Heart left ventricle (tissue), 16 donors: ENCODE measurements at regions of chr1 and their contacts with region 1.

Region 1: DNA sequence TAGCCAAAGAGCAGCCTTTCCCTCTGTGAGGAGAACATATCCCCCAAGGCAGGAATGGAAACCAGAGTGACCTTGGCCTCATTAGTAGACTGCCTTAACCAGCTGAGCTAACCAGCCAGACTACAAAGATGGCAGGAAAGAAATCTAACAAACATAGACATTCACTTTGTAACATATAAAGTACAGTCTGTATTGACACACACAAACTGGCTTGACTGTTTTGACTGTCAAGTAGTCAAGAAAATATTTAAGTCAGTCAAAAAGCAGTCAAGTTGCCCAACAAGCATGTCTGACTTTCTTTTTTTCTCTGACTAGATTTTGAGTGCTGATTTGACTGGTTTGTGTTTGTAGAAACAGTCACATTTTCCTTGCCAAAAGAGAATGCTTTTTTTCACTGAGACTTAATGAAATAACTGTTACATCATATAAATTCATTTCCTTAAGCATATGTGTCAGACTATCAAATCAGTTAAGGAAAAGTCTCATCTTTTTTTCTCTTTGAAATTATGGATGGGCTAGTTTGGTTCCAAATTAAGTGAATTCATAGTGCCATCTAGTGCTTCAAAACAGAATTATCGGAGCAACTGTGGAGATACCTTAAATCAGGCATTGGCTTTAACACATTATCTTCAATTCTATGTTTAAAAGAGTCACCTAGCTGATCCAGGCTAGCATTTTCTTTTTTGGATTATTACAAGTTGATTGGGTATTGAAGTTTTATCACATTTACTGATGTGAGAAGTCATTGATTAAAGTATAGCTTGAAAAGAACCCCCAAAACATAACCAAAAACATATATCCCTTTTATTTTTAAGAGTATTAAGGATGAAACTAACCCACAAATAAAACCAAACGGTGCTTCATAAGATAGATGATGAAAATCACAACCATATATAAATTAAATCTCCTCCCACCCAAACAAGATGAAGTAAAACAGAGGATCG is 75.0 kb downstream of the ATP6V1G3 start:
- DNase-seq: no peak
- ATAC-seq: no peak
- H3K4me3 ChIP-seq: no peak overlapping the region
- H3K27ac ChIP-seq: no peak overlapping the region
- H3K4me1 ChIP-seq: peaks cover 0 to 5% (median 0%) of the 10 kb centered on the region in 12 donors
- H3K27me3 ChIP-seq: no peaks in the 10 kb centered on the region
- CTCF ChIP-seq: peak; percentile 43 to 75 (median 61)
- POLR2A ChIP-seq: no peak

Region 2: DNA sequence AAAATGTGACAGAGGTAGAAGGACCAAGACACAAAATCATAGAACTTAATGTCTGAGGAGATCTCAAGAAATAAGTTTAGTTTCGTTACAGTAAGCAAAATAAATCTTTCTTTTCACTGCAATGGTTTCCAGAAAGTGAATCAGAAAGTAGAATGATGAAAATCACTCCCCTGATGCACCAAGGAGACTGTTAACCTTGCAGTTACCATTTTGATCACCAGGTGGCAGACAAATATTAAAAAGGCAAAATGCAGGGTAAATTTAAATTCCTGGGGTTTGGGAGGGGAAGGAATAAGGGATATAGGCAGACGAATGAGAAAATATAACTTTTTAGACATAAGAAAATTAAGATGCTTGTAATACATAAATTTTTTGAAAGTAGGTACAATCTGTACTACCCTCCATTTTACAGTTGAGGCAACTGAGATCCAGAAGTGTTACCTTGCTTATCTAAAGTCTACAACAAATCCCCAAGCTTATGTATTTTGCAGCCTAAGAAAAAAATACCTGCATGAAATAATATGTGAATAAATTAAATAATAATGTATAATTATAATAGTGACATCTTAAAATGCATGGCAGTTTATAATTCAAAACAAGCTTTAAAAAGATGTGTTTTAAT is 944.2 kb before region 1 on chr1:
- intact Hi-C with region 1: loop called in 5 of 10 experiments (anchors 5 to 10 kb)
- DNase-seq: no peak
- ATAC-seq: no peak
- H3K4me3 ChIP-seq: no peak overlapping the region
- H3K27ac ChIP-seq: no peak overlapping the region
- H3K4me1 ChIP-seq: peaks cover 0 to 3% (median 0%) of the 10 kb centered on the region in 12 donors
- H3K27me3 ChIP-seq: no peaks in the 10 kb centered on the region
- CTCF ChIP-seq: peak; percentile 20 to 65 (median 48)
- POLR2A ChIP-seq: no peak

Region 3: GRCh38 chr1:197924516-197925123 is 540.9 kb before region 1 on chr1:
- intact Hi-C with region 1: loop called in 1 of 10 experiments (anchors 10 kb)
- DNase-seq: no peak
- ATAC-seq: peak in 3 of 4 donors; percentile 61 to 73 (median 66)
- H3K4me3 ChIP-seq: no peak overlapping the region
- H3K27ac ChIP-seq: no peak overlapping the region
- H3K4me1 ChIP-seq: peaks cover 0 to 8% (median under 1%) of the 10 kb centered on the region in 12 donors
- H3K27me3 ChIP-seq: peaks cover 17 to 84% (median 47%) of the 10 kb centered on the region in 9 donors
- CTCF ChIP-seq: peak; percentile 52 to 77 (median 66)
- POLR2A ChIP-seq: no peak

Region 4: GRCh38 chr1:198088360-198089071 is 377.0 kb before region 1 on chr1:
- intact Hi-C with region 1: loop called in 8 of 10 experiments (anchors 1 to 5 kb)
- DNase-seq: no peak
- ATAC-seq: peak in 3 of 4 donors; percentile 13 to 67 (median 56)
- H3K4me3 ChIP-seq: peak overlapping the region in 1 of 12 donors; percentile 11
- H3K27ac ChIP-seq: no peak overlapping the region
- H3K4me1 ChIP-seq: peaks cover 0 to 8% (median 0%) of the 10 kb centered on the region in 12 donors
- H3K27me3 ChIP-seq: no peaks in the 10 kb centered on the region
- CTCF ChIP-seq: peak; percentile 17 to 72 (median 67)
- POLR2A ChIP-seq: no peak

Region 5: GRCh38 chr1:198199105-198199504 is 266.4 kb before region 1 on chr1:
- intact Hi-C with region 1: loop called in 1 of 10 experiments (anchors 10 kb)
- DNase-seq: no peak
- ATAC-seq: no peak
- H3K4me3 ChIP-seq: no peak overlapping the region
- H3K27ac ChIP-seq: no peak overlapping the region
- H3K4me1 ChIP-seq: peaks cover 0 to 82% (median 43%) of the 10 kb centered on the region in 12 donors
- H3K27me3 ChIP-seq: no peaks in the 10 kb centered on the region
- CTCF ChIP-seq: no peak
- POLR2A ChIP-seq: no peak

Region 6: DNA sequence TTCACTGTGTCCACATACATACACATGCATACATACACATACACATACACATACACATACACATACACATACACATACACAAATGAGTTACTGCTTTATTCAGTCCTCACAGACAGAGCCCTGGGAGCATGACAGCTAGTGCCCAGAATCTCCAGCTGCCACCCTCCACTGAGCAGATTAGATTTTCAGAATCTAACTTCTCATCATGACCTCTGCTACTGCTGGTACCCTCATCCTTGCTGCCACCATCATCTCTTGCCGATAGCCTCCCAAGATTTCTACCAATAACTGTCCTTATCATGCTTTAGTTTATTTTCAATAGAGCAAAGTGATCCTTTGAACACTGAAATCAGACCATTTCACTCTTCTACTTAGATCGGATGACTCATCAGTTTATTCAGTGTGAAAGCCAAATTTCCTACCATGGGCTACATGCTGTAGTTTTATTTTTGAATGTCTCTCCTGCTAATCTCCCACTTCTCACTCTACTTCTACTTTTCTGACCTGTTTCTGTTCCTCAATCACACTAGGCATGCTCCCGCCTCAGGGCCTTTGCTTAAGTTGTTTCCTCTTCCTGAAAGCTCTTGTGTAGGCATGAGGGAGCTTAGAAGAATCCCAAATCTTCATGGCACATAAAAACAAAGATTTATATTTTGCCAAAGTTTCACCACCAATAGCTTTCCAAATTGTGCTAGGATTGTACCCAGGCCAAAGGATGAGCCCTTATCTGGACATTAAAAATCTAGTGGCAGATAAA is 32.1 kb after region 1 on chr1:
- intact Hi-C with region 1: no loop called
- DNase-seq: peak in 1 of 5 donors; percentile 27
- ATAC-seq: peak in 2 of 4 donors; percentile 22 to 44
- H3K4me3 ChIP-seq: no peak overlapping the region
- H3K27ac ChIP-seq: peak overlapping the region in 1 of 12 donors; percentile 67
- H3K4me1 ChIP-seq: peaks cover 0 to 29% (median 0%) of the 10 kb centered on the region in 12 donors
- H3K27me3 ChIP-seq: no peaks in the 10 kb centered on the region
- CTCF ChIP-seq: no peak
- POLR2A ChIP-seq: no peak